Heart right ventricle (tissue), 16 donors: ENCODE measurements at regions of chr15 and their contacts with region 1.

Region 1: GRCh38 chr15:65869127-65869953 is at the start of gene RAB11A:
- DNase-seq: peak; percentile 95 to 96
- ATAC-seq: peak; percentile 98 to 99 (median 98)
- H3K4me3 ChIP-seq: peak within 1 kb of the TSS; percentile 73 to 100 (median 85)
- H3K27ac ChIP-seq: peak within 1 kb of the TSS; percentile 83 to 98 (median 95)
- H3K4me1 ChIP-seq: peaks cover 0 to 37% (median 25%) of the 10 kb centered on the region in 9 donors
- H3K27me3 ChIP-seq: no peaks in the 10 kb centered on the region
- CTCF ChIP-seq: peak in 8 of 9 donors; percentile 33 to 58 (median 40)
- total RNA-seq, gene RAB11A: 134 to 211 (median 150) TPM

Region 2: GRCh38 chr15:65610871-65611718 is 258.2 kb before region 1 on chr15 and contains the start of gene INTS14:
- intact Hi-C with region 1: loop called in 1 of 10 experiments (anchors 10 kb)
- DNase-seq: peak; percentile 98 to 99
- ATAC-seq: peak; percentile 99 to 100 (median 99)
- H3K4me3 ChIP-seq: peak within 1 kb of the TSS; percentile 70 to 97 (median 80)
- H3K27ac ChIP-seq: peak within 1 kb of the TSS; percentile 85 to 98 (median 94)
- H3K4me1 ChIP-seq: peaks cover 0 to 29% (median 21%) of the 10 kb centered on the region in 9 donors
- H3K27me3 ChIP-seq: no peaks in the 10 kb centered on the region
- CTCF ChIP-seq: peak; percentile 38 to 85 (median 73)
- total RNA-seq, gene INTS14: 11.1 to 18.4 (median 14.7) TPM

Region 3: DNA sequence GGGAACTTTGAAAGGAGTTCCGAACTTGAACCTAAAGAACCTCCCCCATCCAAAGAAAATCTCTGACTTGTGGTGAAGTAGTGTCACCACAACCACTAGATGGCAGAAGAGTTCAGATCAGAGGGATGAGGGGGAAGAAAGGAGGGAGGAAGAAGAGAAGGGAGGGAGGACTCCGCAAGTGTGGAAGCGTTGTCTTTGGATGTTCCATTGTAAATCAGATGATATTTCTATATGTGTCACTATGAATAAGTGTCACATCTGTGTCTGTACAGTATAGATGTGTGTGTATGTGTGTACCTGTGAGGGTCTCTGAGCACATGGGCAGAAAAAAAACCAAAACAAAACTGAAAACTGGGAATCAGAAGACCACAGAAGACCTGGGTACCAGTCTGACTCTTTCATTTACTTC is 230.7 kb before region 1 on chr15:
- intact Hi-C with region 1: loop called in 1 of 10 experiments (anchors 10 kb)
- DNase-seq: peak in 1 of 2 donors; percentile 31
- ATAC-seq: peak in 7 of 8 donors; percentile 63 to 79 (median 68)
- H3K4me3 ChIP-seq: no peak overlapping the region
- H3K27ac ChIP-seq: no peak overlapping the region
- H3K4me1 ChIP-seq: peaks cover 0 to 25% (median 14%) of the 10 kb centered on the region in 9 donors
- H3K27me3 ChIP-seq: no peaks in the 10 kb centered on the region
- CTCF ChIP-seq: peak; percentile 50 to 87 (median 79)

Region 4: GRCh38 chr15:65757256-65757655 is 112.1 kb before region 1 on chr15:
- intact Hi-C with region 1: no loop called
- DNase-seq: no peak
- ATAC-seq: no peak
- H3K4me3 ChIP-seq: no peak overlapping the region
- H3K27ac ChIP-seq: no peak overlapping the region
- H3K4me1 ChIP-seq: peaks cover 0 to 7% (median 0%) of the 10 kb centered on the region in 9 donors
- H3K27me3 ChIP-seq: no peaks in the 10 kb centered on the region
- CTCF ChIP-seq: no peak

Region 5: GRCh38 chr15:65792130-65792987 is 77.0 kb before region 1 on chr15 and contains the start of gene DENND4A:
- intact Hi-C with region 1: loop called in 4 of 10 experiments (anchors 2 to 5 kb)
- DNase-seq: peak; percentile 98
- ATAC-seq: peak; percentile 95 to 99 (median 98)
- H3K4me3 ChIP-seq: peak within 1 kb of the TSS; percentile 73 to 97 (median 92)
- H3K27ac ChIP-seq: peak within 1 kb of the TSS; percentile 85 to 99 (median 96)
- H3K4me1 ChIP-seq: peaks cover 0 to 57% (median 23%) of the 10 kb centered on the region in 9 donors
- H3K27me3 ChIP-seq: no peaks in the 10 kb centered on the region
- CTCF ChIP-seq: no peak
- total RNA-seq, gene DENND4A: 12.4 to 23.8 (median 16.9) TPM

Region 6: GRCh38 chr15:65832549-65833364 is 36.6 kb before region 1 on chr15:
- intact Hi-C with region 1: loop called in 4 of 10 experiments (anchors 2 to 5 kb)
- DNase-seq: peak; percentile 74 to 92
- ATAC-seq: peak; percentile 91 to 97 (median 95)
- H3K4me3 ChIP-seq: peak overlapping the region in 8 of 10 donors; percentile 3 to 43 (median 26)
- H3K27ac ChIP-seq: peak overlapping the region; percentile 50 to 91 (median 80)
- H3K4me1 ChIP-seq: peaks cover 9 to 74% (median 32%) of the 10 kb centered on the region in 9 donors
- H3K27me3 ChIP-seq: no peaks in the 10 kb centered on the region
- CTCF ChIP-seq: peak in 3 of 9 donors; percentile 12 to 40 (median 39)

Region 7: GRCh38 chr15:65902378-65902777 is 33.0 kb after region 1 on chr15:
- intact Hi-C with region 1: loop called in 2 of 10 experiments (anchors 2 kb)
- DNase-seq: peak in 1 of 2 donors; percentile 34
- ATAC-seq: peak; percentile 69 to 92 (median 84)
- H3K4me3 ChIP-seq: no peak overlapping the region
- H3K27ac ChIP-seq: peak overlapping the region in 1 of 10 donors; percentile 13
- H3K4me1 ChIP-seq: peaks cover 0 to 46% (median 14%) of the 10 kb centered on the region in 9 donors
- H3K27me3 ChIP-seq: no peaks in the 10 kb centered on the region
- CTCF ChIP-seq: no peak